Mammary epithelial cell (primary cell): ENCODE measurements at regions of chr3 and their contacts with region 1.

Region 1: DNA sequence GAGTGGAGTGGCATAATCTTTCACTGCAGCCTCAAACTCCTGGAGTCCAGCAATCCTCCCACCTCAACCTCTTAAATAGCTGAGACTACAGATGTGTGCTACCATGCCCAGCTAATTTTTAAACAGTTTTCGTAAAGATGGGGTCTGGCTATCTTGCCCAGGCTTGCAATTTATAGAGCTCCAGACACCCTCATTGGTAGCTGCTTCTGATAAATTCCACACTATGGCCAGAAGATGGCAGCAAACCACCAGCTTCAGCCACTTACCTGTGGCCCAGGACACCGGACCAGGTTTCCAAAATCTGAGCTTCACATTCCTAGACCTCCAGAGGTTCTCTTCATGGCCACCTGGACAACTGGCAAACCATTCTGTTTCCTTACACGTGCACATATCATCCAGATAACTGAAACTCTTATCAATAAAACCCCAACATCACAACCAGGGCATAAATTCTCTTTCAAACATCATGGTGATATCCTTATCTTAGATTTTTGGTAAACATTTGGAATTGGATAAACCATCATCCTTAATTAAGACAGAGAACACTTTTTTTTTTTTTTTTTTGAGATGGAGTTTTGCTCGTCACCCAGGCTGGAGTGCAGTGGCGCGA is 28.9 kb downstream of the FBXW12 start:
- DNase-seq: peak; percentile 62
- H3K4me3 ChIP-seq: no peak overlapping the region
- H3K27ac ChIP-seq: no peak overlapping the region
- H3K4me1 ChIP-seq: peaks cover 22% of the 10 kb centered on the region
- H3K27me3 ChIP-seq: no peaks in the 10 kb centered on the region
- CTCF ChIP-seq: peak; percentile 67 to 80

Region 2: GRCh38 chr3:47954567-47954966 is 446.4 kb before region 1 on chr3:
- CTCF ChIA-PET with region 1: no interaction called
- dilution Hi-C with region 1: no loop called
- in situ Hi-C with region 1: no loop called
- intact Hi-C with region 1: no loop called
- DNase-seq: no peak
- H3K4me3 ChIP-seq: no peak overlapping the region
- H3K27ac ChIP-seq: no peak overlapping the region
- H3K4me1 ChIP-seq: no peaks in the 10 kb centered on the region
- H3K27me3 ChIP-seq: no peaks in the 10 kb centered on the region
- CTCF ChIP-seq: no peak

Region 3: DNA sequence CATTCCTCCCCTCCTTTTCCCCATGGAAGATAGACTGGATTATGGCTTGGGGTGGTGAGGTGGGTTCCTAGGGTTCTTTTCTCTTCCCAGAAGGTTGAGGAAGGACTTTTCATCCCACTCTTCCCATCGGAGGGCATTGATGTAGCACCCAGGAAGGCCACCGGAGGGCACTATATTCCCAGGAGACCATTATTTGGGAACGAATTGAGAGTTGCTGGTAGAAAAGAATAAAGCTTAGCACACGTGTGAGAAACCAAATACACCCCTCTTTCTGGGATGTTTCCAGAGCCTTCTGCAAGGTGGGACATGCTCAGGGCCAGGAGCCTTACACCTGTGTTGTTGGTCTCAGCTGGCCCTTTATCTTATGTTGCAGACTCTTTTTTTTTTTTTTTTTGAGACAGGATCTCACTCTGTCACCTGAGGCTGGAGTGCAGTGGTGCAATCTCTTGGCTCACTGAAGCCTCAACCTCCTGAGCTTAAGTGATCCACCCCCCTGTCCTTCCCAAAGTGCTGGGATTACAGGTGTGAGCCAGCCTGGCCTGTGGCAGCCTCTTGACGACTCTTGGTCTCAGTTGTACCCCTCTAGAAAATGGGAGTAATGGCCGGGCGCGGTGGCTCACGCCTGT is 206.4 kb before region 1 on chr3:
- CTCF ChIA-PET with region 1: interaction called, 10 read pairs
- dilution Hi-C with region 1: no loop called
- in situ Hi-C with region 1: no loop called
- intact Hi-C with region 1: loop called (anchors 1 kb)
- DNase-seq: peak; percentile 63
- H3K4me3 ChIP-seq: no peak overlapping the region
- H3K27ac ChIP-seq: no peak overlapping the region
- H3K4me1 ChIP-seq: peaks cover 2% of the 10 kb centered on the region
- H3K27me3 ChIP-seq: no peaks in the 10 kb centered on the region
- CTCF ChIP-seq: peak; percentile 88 to 97

Region 4: DNA sequence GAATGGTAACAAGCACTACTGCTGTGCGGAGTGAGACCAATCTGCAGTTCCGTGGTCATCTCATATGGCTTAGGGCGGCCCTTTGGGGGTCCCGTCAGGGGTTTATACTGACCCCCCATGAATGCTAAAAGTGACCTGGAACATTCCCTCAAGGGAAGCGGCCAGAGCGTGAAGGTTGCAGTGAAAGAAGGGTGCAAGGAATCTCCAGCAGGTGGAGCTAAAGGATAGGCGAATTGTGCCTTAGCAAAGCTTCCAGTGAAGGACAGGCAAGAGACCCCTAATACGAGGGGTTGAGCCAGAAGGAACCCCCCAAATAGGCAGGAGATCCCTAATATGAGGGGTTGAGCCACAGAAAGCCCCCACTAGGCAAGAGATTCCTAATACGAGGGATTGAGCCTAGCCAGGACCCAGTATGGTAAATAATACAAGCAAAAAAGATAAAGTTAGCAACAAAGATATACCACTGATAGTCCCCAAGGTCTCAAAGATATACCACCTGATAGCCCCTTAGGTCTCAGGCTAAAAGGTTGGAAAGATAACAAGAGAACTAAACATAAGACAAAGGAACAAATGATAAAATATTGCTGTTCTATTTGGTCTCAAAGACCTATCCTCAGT is 127.2 kb before region 1 on chr3:
- CTCF ChIA-PET with region 1: no interaction called
- dilution Hi-C with region 1: no loop called
- in situ Hi-C with region 1: loop called (anchors 10 kb)
- intact Hi-C with region 1: loop called (anchors 1 kb)
- DNase-seq: peak; percentile 34
- H3K4me3 ChIP-seq: no peak overlapping the region
- H3K27ac ChIP-seq: no peak overlapping the region
- H3K4me1 ChIP-seq: peaks cover 15% of the 10 kb centered on the region
- H3K27me3 ChIP-seq: no peaks in the 10 kb centered on the region
- CTCF ChIP-seq: peak; percentile 84 to 86

Region 5: GRCh38 chr3:48352547-48352946 is 48.4 kb before region 1 on chr3:
- CTCF ChIA-PET with region 1: no interaction called
- dilution Hi-C with region 1: loop called (anchors 5 kb)
- in situ Hi-C with region 1: no loop called
- intact Hi-C with region 1: no loop called
- DNase-seq: peak; percentile 6
- H3K4me3 ChIP-seq: no peak overlapping the region
- H3K27ac ChIP-seq: no peak overlapping the region
- H3K4me1 ChIP-seq: peaks cover 3% of the 10 kb centered on the region
- H3K27me3 ChIP-seq: peaks cover 3% of the 10 kb centered on the region
- CTCF ChIP-seq: no peak

Region 6: DNA sequence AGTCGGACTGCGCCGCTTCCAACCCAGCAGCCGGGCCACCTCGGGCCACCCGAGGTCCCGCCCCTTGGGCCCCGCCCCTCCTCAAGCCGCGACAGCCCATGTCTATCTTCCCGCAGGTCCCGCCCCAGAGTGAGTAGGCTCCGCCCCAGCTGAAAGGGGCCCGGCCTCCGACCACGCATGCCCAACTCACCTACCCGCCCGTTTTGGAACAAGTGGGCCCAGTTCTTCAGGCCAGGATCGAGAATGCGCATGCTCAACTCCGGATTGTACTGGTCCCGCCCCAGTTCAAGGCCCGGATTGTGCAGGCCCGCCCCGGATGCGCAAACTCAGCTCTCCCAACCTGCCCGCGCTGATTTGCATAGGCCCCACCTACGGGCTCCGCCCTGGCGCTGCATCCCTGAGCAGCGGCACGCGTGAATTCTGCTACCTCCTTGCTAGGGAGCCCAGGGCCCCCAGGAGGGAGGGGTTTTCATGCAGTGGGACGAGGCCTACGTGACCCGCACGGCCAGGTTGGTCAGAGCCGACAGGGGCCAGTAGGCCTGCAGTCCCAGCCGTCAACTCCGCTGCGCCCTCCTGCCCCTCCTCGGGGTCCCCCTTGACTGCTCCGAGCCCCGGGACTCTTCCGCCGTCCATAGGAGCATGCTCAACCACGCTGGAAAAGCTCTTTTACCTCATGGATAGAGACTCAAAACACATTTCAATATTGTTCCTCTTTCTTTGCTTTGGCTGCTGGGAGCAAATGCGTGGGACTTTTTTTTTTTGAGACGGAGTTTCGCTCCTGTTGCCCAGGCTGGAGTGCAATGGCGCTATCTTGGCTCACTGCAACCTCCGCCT is 156.1 kb after region 1 on chr3 and contains the start of gene PFKFB4:
- CTCF ChIA-PET with region 1: no interaction called
- dilution Hi-C with region 1: loop called (anchors 5 kb)
- in situ Hi-C with region 1: no loop called
- intact Hi-C with region 1: no loop called
- DNase-seq: peak; percentile 99
- H3K4me3 ChIP-seq: peak within 1 kb of the TSS; percentile 37 to 79 (median 64)
- H3K27ac ChIP-seq: peak within 1 kb of the TSS; percentile 47
- H3K4me1 ChIP-seq: peaks cover 47% of the 10 kb centered on the region
- H3K27me3 ChIP-seq: no peaks in the 10 kb centered on the region
- CTCF ChIP-seq: no peak
- total RNA-seq, gene PFKFB4: 14.7 to 45.3 TPM